Natural killer cell (primary cell): ENCODE measurements at regions of chr16 and their contacts with region 1.

Region 1: GRCh38 chr16:84952335-84953189 is 58.8 kb downstream of the ZDHHC7 start:
- DNase-seq: peak; percentile 56 to 89
- ATAC-seq: peak; percentile 83 to 95 (median 91)
- H3K4me3 ChIP-seq: no peak overlapping the region
- H3K4me3 Mint-ChIP-seq: no peak overlapping the region
- H3K27ac ChIP-seq: no peak overlapping the region
- H3K27ac Mint-ChIP-seq: no peak overlapping the region
- H3K4me1 ChIP-seq: peaks cover 7% of the 10 kb centered on the region
- H3K4me1 Mint-ChIP-seq: peaks cover 0 to 3% of the 10 kb centered on the region in 2 donors
- H3K27me3 ChIP-seq: no peaks in the 10 kb centered on the region
- H3K27me3 Mint-ChIP-seq: peaks cover 0 to 7% of the 10 kb centered on the region in 2 donors
- CTCF ChIP-seq: peak; percentile 82

Region 2: GRCh38 chr16:84754353-84754856 is 198.2 kb before region 1 on chr16:
- intact Hi-C with region 1: loop called (anchors 1 kb)
- DNase-seq: peak; percentile 27 to 89
- ATAC-seq: peak; percentile 76 to 85 (median 85)
- H3K4me3 ChIP-seq: no peak overlapping the region
- H3K4me3 Mint-ChIP-seq: no peak overlapping the region
- H3K27ac ChIP-seq: no peak overlapping the region
- H3K27ac Mint-ChIP-seq: peak overlapping the region; percentile 9 to 44
- H3K4me1 ChIP-seq: peaks cover 26% of the 10 kb centered on the region
- H3K4me1 Mint-ChIP-seq: peaks cover 65 to 76% of the 10 kb centered on the region in 2 donors
- H3K27me3 ChIP-seq: no peaks in the 10 kb centered on the region
- H3K27me3 Mint-ChIP-seq: no peaks in the 10 kb centered on the region
- CTCF ChIP-seq: peak; percentile 77

Region 3: GRCh38 chr16:84925092-84925772 is 27.3 kb before region 1 on chr16:
- intact Hi-C with region 1: loop called (anchors 1 kb)
- DNase-seq: peak; percentile 54 to 79
- ATAC-seq: peak in 2 of 3 donors; percentile 61 to 63
- H3K4me3 ChIP-seq: no peak overlapping the region
- H3K4me3 Mint-ChIP-seq: no peak overlapping the region
- H3K27ac ChIP-seq: no peak overlapping the region
- H3K27ac Mint-ChIP-seq: no peak overlapping the region
- H3K4me1 ChIP-seq: peaks cover 4% of the 10 kb centered on the region
- H3K4me1 Mint-ChIP-seq: peaks cover 0 to 9% of the 10 kb centered on the region in 2 donors
- H3K27me3 ChIP-seq: no peaks in the 10 kb centered on the region
- H3K27me3 Mint-ChIP-seq: peaks cover 0 to 6% of the 10 kb centered on the region in 2 donors
- CTCF ChIP-seq: peak; percentile 79